GM12878 (cell line): ENCODE measurements at regions of chr7 and their contacts with region 1.

Region 1: GRCh38 chr7:37732253-37732652 is 48.7 kb downstream of the GPR141 start:
- DNase-seq: peak; percentile 56
- ATAC-seq: peak; percentile 89
- H3K4me3 ChIP-seq: no peak overlapping the region
- H3K27ac ChIP-seq: no peak overlapping the region
- H3K4me1 ChIP-seq: peaks cover 4% of the 10 kb centered on the region
- H3K27me3 ChIP-seq: no peaks in the 10 kb centered on the region
- CTCF ChIP-seq: peak; percentile 73 to 79 (median 77)
- EP300 ChIP-seq: no peak
- POLR2A ChIP-seq: no peak
- RAD21 ChIP-seq: peak; percentile 90

Region 2: GRCh38 chr7:37495574-37496184 is 236.6 kb before region 1 on chr7:
- CTCF ChIA-PET with region 1: interaction called, 10 read pairs
- POLR2A ChIA-PET with region 1: no interaction called
- RAD21 ChIA-PET with region 1: interaction called, 5 read pairs
- SMC1A ChIA-PET with region 1: interaction called, 4 read pairs
- in situ Hi-C with region 1: no loop called
- intact Hi-C with region 1: no loop called
- DNase-seq: no peak
- ATAC-seq: peak; percentile 58; the same call in 1 of the 3 replicates
- H3K4me3 ChIP-seq: no peak overlapping the region
- H3K27ac ChIP-seq: no peak overlapping the region
- H3K4me1 ChIP-seq: peaks cover 8% of the 10 kb centered on the region; the same call in 1 of the 2 replicates
- H3K27me3 ChIP-seq: no peaks in the 10 kb centered on the region
- CTCF ChIP-seq: peak; percentile 55 to 72 (median 62)
- EP300 ChIP-seq: no peak
- POLR2A ChIP-seq: no peak
- RAD21 ChIP-seq: peak; percentile 57

Region 3: DNA sequence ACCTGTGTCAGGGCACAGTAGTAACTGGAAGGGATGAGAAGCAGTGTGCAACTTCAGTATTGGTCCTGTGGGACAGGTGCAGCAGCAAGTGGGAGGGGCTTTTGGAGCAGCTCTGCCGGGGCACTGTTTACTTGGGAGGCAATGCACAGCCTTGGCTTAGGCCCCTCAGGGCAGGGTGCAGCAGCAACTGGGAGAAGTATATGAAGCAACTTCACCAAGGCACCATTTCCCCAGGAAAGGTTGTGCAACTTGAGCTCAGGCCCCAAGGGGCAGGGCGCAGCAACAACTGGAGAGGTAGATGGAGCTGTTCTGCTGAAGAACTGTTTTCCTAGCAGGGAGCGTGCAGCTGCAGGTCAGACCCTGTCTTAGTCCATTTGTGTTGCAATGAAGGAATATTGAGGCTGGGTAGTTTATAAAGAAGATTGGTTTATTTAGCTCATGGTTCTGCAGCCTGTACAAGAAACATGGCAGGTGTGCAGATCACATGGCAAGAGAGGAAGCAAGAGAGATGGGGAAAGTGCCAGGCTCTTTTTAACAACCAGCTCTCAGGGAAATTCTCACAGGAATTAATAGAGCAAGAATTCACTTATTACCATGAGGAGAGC is 38.0 kb before region 1 on chr7:
- CTCF ChIA-PET with region 1: interaction called, 8 read pairs
- POLR2A ChIA-PET with region 1: interaction called, 5 read pairs
- RAD21 ChIA-PET with region 1: interaction called, 11 read pairs
- SMC1A ChIA-PET with region 1: interaction called, 11 read pairs
- in situ Hi-C with region 1: no loop called
- intact Hi-C with region 1: no loop called
- DNase-seq: no peak
- ATAC-seq: no peak
- H3K4me3 ChIP-seq: no peak overlapping the region
- H3K27ac ChIP-seq: no peak overlapping the region; the same call in 1 of the 2 replicates
- H3K4me1 ChIP-seq: peaks cover 7% of the 10 kb centered on the region
- H3K27me3 ChIP-seq: no peaks in the 10 kb centered on the region
- CTCF ChIP-seq: no peak
- EP300 ChIP-seq: no peak
- POLR2A ChIP-seq: no peak
- RAD21 ChIP-seq: no peak

Region 4: GRCh38 chr7:37751096-37751495 is 18.8 kb after region 1 on chr7:
- CTCF ChIA-PET with region 1: interaction called, 12 read pairs
- POLR2A ChIA-PET with region 1: interaction called, 5 read pairs
- RAD21 ChIA-PET with region 1: interaction called, 4 read pairs
- SMC1A ChIA-PET with region 1: interaction called, 17 read pairs
- in situ Hi-C with region 1: no loop called
- intact Hi-C with region 1: no loop called
- DNase-seq: no peak
- ATAC-seq: no peak
- H3K4me3 ChIP-seq: no peak overlapping the region
- H3K27ac ChIP-seq: no peak overlapping the region
- H3K4me1 ChIP-seq: no peaks in the 10 kb centered on the region
- H3K27me3 ChIP-seq: no peaks in the 10 kb centered on the region
- CTCF ChIP-seq: no peak
- EP300 ChIP-seq: no peak
- POLR2A ChIP-seq: no peak
- RAD21 ChIP-seq: no peak

Region 5: GRCh38 chr7:37815671-37816371 is 83.6 kb after region 1 on chr7:
- CTCF ChIA-PET with region 1: interaction called, 10 read pairs
- POLR2A ChIA-PET with region 1: interaction called, 5 read pairs
- RAD21 ChIA-PET with region 1: interaction called, 23 read pairs
- SMC1A ChIA-PET with region 1: interaction called, 13 read pairs
- in situ Hi-C with region 1: no loop called
- intact Hi-C with region 1: no loop called
- DNase-seq: peak; percentile 78
- ATAC-seq: peak; percentile 89
- H3K4me3 ChIP-seq: peak overlapping the region; percentile 6; the same call in 1 of the 2 replicates
- H3K27ac ChIP-seq: peak overlapping the region; percentile 90
- H3K4me1 ChIP-seq: peaks cover 43% of the 10 kb centered on the region
- H3K27me3 ChIP-seq: no peaks in the 10 kb centered on the region
- CTCF ChIP-seq: no peak
- EP300 ChIP-seq: peak; percentile 94 to 95
- POLR2A ChIP-seq: no peak
- RAD21 ChIP-seq: 0 out of 2 replicates have a peak, but pooled peaks have one; percentile 6

Region 6: GRCh38 chr7:37853474-37853873 is 121.2 kb after region 1 on chr7:
- CTCF ChIA-PET with region 1: interaction called, 10 read pairs
- POLR2A ChIA-PET with region 1: interaction called, 3 read pairs
- RAD21 ChIA-PET with region 1: interaction called, 8 read pairs
- SMC1A ChIA-PET with region 1: interaction called, 8 read pairs
- in situ Hi-C with region 1: no loop called
- intact Hi-C with region 1: no loop called
- DNase-seq: no peak
- ATAC-seq: peak; percentile 71
- H3K4me3 ChIP-seq: no peak overlapping the region
- H3K27ac ChIP-seq: no peak overlapping the region
- H3K4me1 ChIP-seq: no peaks in the 10 kb centered on the region
- H3K27me3 ChIP-seq: no peaks in the 10 kb centered on the region; a peak in 1 of 4 replicates
- CTCF ChIP-seq: peak; percentile 58 to 65 (median 62)
- EP300 ChIP-seq: no peak
- POLR2A ChIP-seq: no peak
- RAD21 ChIP-seq: peak; percentile 72